ENCODE measurements at regions of chr14 and their contacts with region 1.

Region 1: GRCh38 chr14:89416002-89416995 is 734 bp downstream of the FOXN3 start:
- DNase-seq: peak; percentile 97 to 100 (median 98)
- ATAC-seq: peak; percentile 82
- H3K4me3 ChIP-seq: peak overlapping the region; percentile 83
- H3K4me3 Mint-ChIP-seq: peak overlapping the region; percentile 87 to 97 (median 94)
- H3K27ac ChIP-seq: peak overlapping the region; percentile 76
- H3K27ac Mint-ChIP-seq: peak overlapping the region; percentile 81 to 94 (median 90)
- H3K4me1 ChIP-seq: peaks cover 11 to 20% of the 10 kb centered on the region in 2 donors
- H3K4me1 Mint-ChIP-seq: peaks cover 37 to 70% (median 63%) of the 10 kb centered on the region in 7 donors
- H3K27me3 ChIP-seq: no peaks in the 10 kb centered on the region
- H3K27me3 Mint-ChIP-seq: peaks cover 0 to 2% (median 0%) of the 10 kb centered on the region in 5 donors

Region 2: DNA sequence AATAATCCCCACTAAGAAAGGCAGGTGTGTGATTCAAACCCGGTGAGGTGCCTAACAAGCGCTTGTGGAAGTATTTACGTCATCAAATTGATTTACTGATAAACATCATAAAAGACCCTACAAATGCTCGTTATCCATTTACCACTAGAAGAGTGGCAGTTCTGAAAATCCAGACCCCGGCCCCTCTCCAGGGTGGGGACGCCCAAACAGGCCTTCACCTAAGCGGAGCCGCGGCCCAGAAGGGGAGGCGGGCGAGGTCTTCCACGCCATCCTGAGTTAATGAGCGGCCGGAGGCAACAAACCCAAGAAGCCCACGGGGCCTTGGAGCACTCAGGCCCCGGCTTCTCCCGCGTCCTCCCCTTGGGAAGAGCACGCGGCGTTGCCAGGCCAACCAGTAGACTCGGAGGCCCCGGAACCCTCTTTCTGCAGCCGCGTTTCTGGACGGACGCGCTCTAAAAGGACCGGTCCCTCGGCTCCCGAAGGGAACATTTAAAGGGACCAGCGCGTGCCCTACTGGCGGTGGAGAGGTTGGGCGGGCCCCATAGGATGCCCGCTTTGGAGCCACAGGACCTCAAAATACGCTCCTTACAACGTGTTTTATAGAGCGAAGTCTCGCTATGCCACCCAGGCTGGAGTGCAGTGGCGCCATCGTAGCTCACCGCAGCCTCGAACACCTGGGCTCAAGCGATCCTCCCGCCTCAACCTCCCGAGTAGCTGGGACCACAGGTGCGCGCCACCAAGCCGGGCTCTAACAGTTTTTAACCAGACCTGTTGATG is 865.0 kb before region 1 on chr14:
- CTCF ChIA-PET with region 1: no interaction called
- POLR2A ChIA-PET with region 1: no interaction called
- intact Hi-C with region 1: loop called in 1 of 2 experiments (anchors 10 kb)
- DNase-seq: peak in 3 of 9 donors; percentile 31 to 59 (median 33)
- ATAC-seq: peak; percentile 43
- H3K4me3 ChIP-seq: peak overlapping the region; percentile 49
- H3K4me3 Mint-ChIP-seq: peak overlapping the region; percentile 41 to 80 (median 71)
- H3K27ac ChIP-seq: no peak overlapping the region
- H3K27ac Mint-ChIP-seq: no peak overlapping the region
- H3K4me1 ChIP-seq: peaks cover 6 to 7% of the 10 kb centered on the region in 2 donors
- H3K4me1 Mint-ChIP-seq: peaks cover 6 to 29% (median 18%) of the 10 kb centered on the region in 7 donors
- H3K27me3 ChIP-seq: peaks cover 31 to 36% of the 10 kb centered on the region in 2 donors
- H3K27me3 Mint-ChIP-seq: peaks cover 40 to 46% (median 45%) of the 10 kb centered on the region in 5 donors

Region 3: GRCh38 chr14:89240414-89240813 is 175.9 kb before region 1 on chr14:
- CTCF ChIA-PET with region 1: no interaction called
- POLR2A ChIA-PET with region 1: no interaction called
- intact Hi-C with region 1: loop called in 1 of 2 experiments (anchors 5 kb)
- DNase-seq: peak in 1 of 9 donors; percentile 19
- ATAC-seq: peak; percentile 54
- H3K4me3 ChIP-seq: no peak overlapping the region
- H3K4me3 Mint-ChIP-seq: peak overlapping the region in 1 of 10 donors; percentile 32
- H3K27ac ChIP-seq: no peak overlapping the region
- H3K27ac Mint-ChIP-seq: peak overlapping the region in 6 of 9 donors; percentile 8 to 74 (median 52)
- H3K4me1 ChIP-seq: peaks cover 0 to 5% of the 10 kb centered on the region in 2 donors
- H3K4me1 Mint-ChIP-seq: peaks cover 42 to 89% (median 74%) of the 10 kb centered on the region in 7 donors
- H3K27me3 ChIP-seq: no peaks in the 10 kb centered on the region
- H3K27me3 Mint-ChIP-seq: no peaks in the 10 kb centered on the region

Region 4: DNA sequence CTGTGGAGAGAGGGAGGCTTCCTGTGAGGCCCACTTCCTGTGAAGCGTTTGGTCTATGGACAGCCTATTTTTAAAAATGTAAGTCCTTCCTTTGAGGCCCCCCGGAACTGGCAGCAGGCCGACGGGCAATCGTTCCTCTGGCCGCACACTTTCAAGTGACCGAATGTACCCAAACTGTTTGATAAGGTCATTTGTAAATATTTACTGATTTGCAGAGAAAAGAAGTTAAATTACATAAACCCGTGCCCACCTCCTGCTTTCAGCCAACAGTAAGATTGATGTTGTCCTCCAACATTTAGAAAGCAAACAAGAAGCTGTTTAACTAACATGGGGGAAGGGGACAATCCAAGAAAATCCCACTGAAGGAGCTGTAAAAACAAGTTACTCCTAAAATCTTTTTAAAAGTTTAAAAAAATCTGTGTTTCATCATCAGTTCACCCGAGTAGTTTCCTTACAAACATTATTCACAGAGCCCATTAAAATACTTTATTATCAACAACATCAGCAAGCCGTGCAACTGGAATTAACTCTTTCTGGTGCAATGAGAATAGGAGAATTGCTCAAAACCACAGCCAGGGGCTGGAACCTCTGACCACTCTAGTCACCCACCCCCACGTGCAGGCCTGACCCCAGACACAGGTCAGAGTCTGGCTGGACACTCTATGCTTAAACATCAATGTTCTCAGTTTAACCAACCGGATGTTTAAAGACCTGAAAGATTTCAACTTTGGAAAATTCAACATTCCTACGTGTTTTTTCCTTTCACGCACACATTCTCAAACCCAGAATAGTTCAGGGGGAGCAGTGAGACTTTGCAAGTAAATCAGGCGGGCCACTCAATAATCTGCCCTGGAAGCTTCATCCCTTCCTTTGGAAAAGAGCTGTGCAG is 64.5 kb before region 1 on chr14:
- CTCF ChIA-PET with region 1: no interaction called
- POLR2A ChIA-PET with region 1: no interaction called
- intact Hi-C with region 1: loop called (anchors 1 to 5 kb)
- DNase-seq: peak in 5 of 9 donors; percentile 4 to 27 (median 16)
- ATAC-seq: no peak
- H3K4me3 ChIP-seq: peak overlapping the region; percentile 6
- H3K4me3 Mint-ChIP-seq: peak overlapping the region; percentile 68 to 86 (median 78)
- H3K27ac ChIP-seq: peak overlapping the region; percentile 48
- H3K27ac Mint-ChIP-seq: peak overlapping the region; percentile 68 to 96 (median 89)
- H3K4me1 ChIP-seq: peaks cover 23 to 26% of the 10 kb centered on the region in 2 donors
- H3K4me1 Mint-ChIP-seq: peaks cover 47 to 79% (median 72%) of the 10 kb centered on the region in 7 donors
- H3K27me3 ChIP-seq: no peaks in the 10 kb centered on the region
- H3K27me3 Mint-ChIP-seq: no peaks in the 10 kb centered on the region

Region 5: DNA sequence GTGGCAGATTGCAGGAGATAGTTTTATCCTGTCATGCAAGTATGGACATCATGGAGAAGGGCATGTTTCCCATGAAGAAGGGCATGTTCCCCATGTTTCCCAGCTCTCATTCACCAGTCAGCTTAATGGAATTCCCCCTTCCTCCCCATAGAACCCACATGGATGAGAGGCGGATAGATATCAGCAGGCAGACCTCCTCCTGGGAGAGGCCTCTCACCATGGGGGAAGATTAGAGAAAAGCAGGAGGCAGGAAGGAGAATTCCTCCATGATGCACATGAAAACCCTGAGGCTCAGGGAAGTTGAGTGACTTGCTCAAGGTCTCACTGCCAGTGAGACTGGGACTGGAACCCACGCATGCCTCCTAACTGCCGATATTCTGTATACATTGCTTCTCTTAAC is 93.6 kb after region 1 on chr14:
- CTCF ChIA-PET with region 1: no interaction called
- POLR2A ChIA-PET with region 1: no interaction called
- intact Hi-C with region 1: loop called (anchors 1 kb)
- DNase-seq: no peak
- ATAC-seq: no peak
- H3K4me3 ChIP-seq: no peak overlapping the region
- H3K4me3 Mint-ChIP-seq: peak overlapping the region; percentile 75 to 89 (median 84)
- H3K27ac ChIP-seq: peak overlapping the region; percentile 52
- H3K27ac Mint-ChIP-seq: peak overlapping the region; percentile 90 to 96 (median 94)
- H3K4me1 ChIP-seq: peaks cover 18 to 25% of the 10 kb centered on the region in 2 donors
- H3K4me1 Mint-ChIP-seq: peaks cover 46 to 79% (median 65%) of the 10 kb centered on the region in 7 donors
- H3K27me3 ChIP-seq: no peaks in the 10 kb centered on the region
- H3K27me3 Mint-ChIP-seq: no peaks in the 10 kb centered on the region

Region 6: DNA sequence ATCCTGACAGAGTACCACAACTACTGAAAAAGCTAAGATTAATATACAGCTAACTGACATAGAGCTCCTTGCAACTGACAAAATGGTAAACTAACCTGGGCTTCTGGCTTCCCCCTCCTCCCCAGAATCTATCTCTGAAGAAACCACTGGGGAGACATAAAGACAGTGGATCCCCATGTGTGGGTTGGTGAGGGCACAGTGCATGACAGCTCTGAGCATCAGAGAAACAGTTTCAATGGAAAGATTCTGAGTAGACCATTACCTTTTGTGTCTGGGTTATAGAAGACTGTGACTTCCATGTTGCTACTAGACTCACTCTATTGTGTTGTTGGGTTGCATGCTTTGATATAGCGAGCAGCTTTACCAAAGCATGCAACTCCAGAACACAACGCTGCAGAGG is 290.8 kb after region 1 on chr14:
- CTCF ChIA-PET with region 1: no interaction called
- POLR2A ChIA-PET with region 1: no interaction called
- intact Hi-C with region 1: no loop called
- DNase-seq: no peak
- ATAC-seq: no peak
- H3K4me3 ChIP-seq: no peak overlapping the region
- H3K4me3 Mint-ChIP-seq: no peak overlapping the region
- H3K27ac ChIP-seq: no peak overlapping the region
- H3K27ac Mint-ChIP-seq: peak overlapping the region in 1 of 9 donors; percentile 45
- H3K4me1 ChIP-seq: peaks cover 3 to 10% of the 10 kb centered on the region in 2 donors
- H3K4me1 Mint-ChIP-seq: peaks cover 16 to 52% (median 33%) of the 10 kb centered on the region in 7 donors
- H3K27me3 ChIP-seq: no peaks in the 10 kb centered on the region
- H3K27me3 Mint-ChIP-seq: no peaks in the 10 kb centered on the region

Region 7: GRCh38 chr14:89767861-89768268 is 351.6 kb after region 1 on chr14:
- CTCF ChIA-PET with region 1: interaction called, 4 read pairs
- POLR2A ChIA-PET with region 1: no interaction called
- intact Hi-C with region 1: loop called (anchors 1 kb)
- DNase-seq: peak; percentile 14 to 77 (median 66)
- ATAC-seq: peak; percentile 95
- H3K4me3 ChIP-seq: no peak overlapping the region
- H3K4me3 Mint-ChIP-seq: peak overlapping the region in 9 of 10 donors; percentile 39 to 79 (median 72)
- H3K27ac ChIP-seq: no peak overlapping the region
- H3K27ac Mint-ChIP-seq: peak overlapping the region; percentile 45 to 92 (median 85)
- H3K4me1 ChIP-seq: peaks cover 8 to 21% of the 10 kb centered on the region in 2 donors
- H3K4me1 Mint-ChIP-seq: peaks cover 24 to 60% (median 44%) of the 10 kb centered on the region in 7 donors
- H3K27me3 ChIP-seq: no peaks in the 10 kb centered on the region
- H3K27me3 Mint-ChIP-seq: peaks cover 0 to 10% (median 0%) of the 10 kb centered on the region in 5 donors